CD4-positive, alpha-beta T cell (primary cell): ENCODE measurements at regions of chr10 and their contacts with region 1.

Region 1: GRCh38 chr10:119542988-119543813 is 682 bp upstream of the RGS10 start:
- DNase-seq: peak; percentile 47 to 85 (median 63)
- ATAC-seq: peak; percentile 48
- H3K4me3 ChIP-seq: peak overlapping the region; percentile 92
- H3K4me3 Mint-ChIP-seq: peak overlapping the region; percentile 98
- H3K27ac ChIP-seq: peak overlapping the region in 1 of 2 donors; percentile 84
- H3K27ac Mint-ChIP-seq: peak overlapping the region; percentile 88
- H3K4me1 ChIP-seq: peaks cover 40% of the 10 kb centered on the region
- H3K4me1 Mint-ChIP-seq: peaks cover 41% of the 10 kb centered on the region
- H3K27me3 ChIP-seq: no peaks in the 10 kb centered on the region
- H3K27me3 Mint-ChIP-seq: no peaks in the 10 kb centered on the region
- CTCF ChIP-seq: peak; percentile 85

Region 2: GRCh38 chr10:119305860-119306513 is 237.2 kb before region 1 on chr10:
- CTCF ChIA-PET with region 1: interaction called, 3 read pairs
- POLR2A ChIA-PET with region 1: interaction called, 9 read pairs
- intact Hi-C with region 1: loop called in 1 of 2 experiments (anchors 5 kb)
- DNase-seq: peak; percentile 50 to 92 (median 82)
- ATAC-seq: peak; percentile 81
- H3K4me3 ChIP-seq: peak overlapping the region; percentile 57
- H3K4me3 Mint-ChIP-seq: peak overlapping the region; percentile 88
- H3K27ac ChIP-seq: peak overlapping the region; percentile 83 to 94
- H3K27ac Mint-ChIP-seq: peak overlapping the region; percentile 94
- H3K4me1 ChIP-seq: peaks cover 77% of the 10 kb centered on the region
- H3K4me1 Mint-ChIP-seq: peaks cover 75% of the 10 kb centered on the region
- H3K27me3 ChIP-seq: no peaks in the 10 kb centered on the region
- H3K27me3 Mint-ChIP-seq: no peaks in the 10 kb centered on the region
- CTCF ChIP-seq: no peak

Region 3: DNA sequence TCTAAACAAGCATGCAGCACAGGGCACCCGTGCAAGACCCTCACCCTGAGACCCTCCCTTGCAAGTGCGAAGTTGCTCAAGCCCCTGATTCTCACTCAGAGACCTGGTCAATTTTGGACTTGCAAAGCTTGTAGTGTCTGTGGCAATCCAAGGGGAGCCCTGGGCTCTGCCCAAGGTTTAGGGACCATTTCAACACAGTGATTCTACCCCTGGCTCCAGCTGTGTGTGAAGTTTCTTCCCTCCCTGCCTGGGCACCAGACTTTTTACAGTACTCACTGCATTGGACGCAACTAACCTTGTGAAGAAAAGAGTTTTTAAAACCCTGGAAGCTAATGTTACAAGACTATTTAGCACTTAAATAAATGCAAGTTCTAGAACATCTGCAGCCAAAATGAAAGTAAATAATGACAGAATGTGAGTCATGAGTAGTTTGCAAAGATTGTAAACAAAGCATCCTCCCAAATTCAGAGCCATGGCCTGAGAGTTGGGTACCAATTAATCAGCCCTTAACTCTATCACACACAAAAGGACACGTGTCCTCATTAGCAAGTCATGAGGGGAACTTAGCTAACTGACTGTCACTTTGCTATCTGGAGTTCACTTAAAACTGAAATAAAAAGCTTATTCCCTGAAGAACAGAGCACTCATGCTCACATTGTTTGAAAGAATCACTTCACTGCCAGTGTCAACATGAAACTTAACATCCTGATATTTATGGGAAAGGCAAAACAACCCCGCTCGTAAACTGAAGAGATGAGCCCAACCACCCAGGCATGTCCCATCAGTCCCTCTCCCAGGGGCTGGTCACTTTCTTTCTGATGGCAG is 48.8 kb before region 1 on chr10:
- CTCF ChIA-PET with region 1: interaction called, 14 read pairs
- POLR2A ChIA-PET with region 1: interaction called, 74 read pairs
- intact Hi-C with region 1: no loop called
- DNase-seq: peak in 1 of 14 experiments; percentile 23
- ATAC-seq: no peak
- H3K4me3 ChIP-seq: no peak overlapping the region
- H3K4me3 Mint-ChIP-seq: peak overlapping the region; percentile 57
- H3K27ac ChIP-seq: peak overlapping the region; percentile 33 to 57
- H3K27ac Mint-ChIP-seq: peak overlapping the region; percentile 92
- H3K4me1 ChIP-seq: peaks cover 72% of the 10 kb centered on the region
- H3K4me1 Mint-ChIP-seq: peaks cover 80% of the 10 kb centered on the region
- H3K27me3 ChIP-seq: no peaks in the 10 kb centered on the region
- H3K27me3 Mint-ChIP-seq: no peaks in the 10 kb centered on the region
- CTCF ChIP-seq: no peak

Region 4: GRCh38 chr10:119526621-119527592 is 16.3 kb before region 1 on chr10:
- CTCF ChIA-PET with region 1: interaction called, 13 read pairs
- POLR2A ChIA-PET with region 1: interaction called, 38 read pairs
- intact Hi-C with region 1: no loop called
- DNase-seq: peak in 1 of 14 experiments; percentile 3
- ATAC-seq: peak; percentile 32
- H3K4me3 ChIP-seq: no peak overlapping the region
- H3K4me3 Mint-ChIP-seq: peak overlapping the region; percentile 1
- H3K27ac ChIP-seq: no peak overlapping the region
- H3K27ac Mint-ChIP-seq: peak overlapping the region; percentile 59
- H3K4me1 ChIP-seq: peaks cover 38% of the 10 kb centered on the region
- H3K4me1 Mint-ChIP-seq: peaks cover 63% of the 10 kb centered on the region
- H3K27me3 ChIP-seq: no peaks in the 10 kb centered on the region
- H3K27me3 Mint-ChIP-seq: no peaks in the 10 kb centered on the region
- CTCF ChIP-seq: no peak

Region 5: DNA sequence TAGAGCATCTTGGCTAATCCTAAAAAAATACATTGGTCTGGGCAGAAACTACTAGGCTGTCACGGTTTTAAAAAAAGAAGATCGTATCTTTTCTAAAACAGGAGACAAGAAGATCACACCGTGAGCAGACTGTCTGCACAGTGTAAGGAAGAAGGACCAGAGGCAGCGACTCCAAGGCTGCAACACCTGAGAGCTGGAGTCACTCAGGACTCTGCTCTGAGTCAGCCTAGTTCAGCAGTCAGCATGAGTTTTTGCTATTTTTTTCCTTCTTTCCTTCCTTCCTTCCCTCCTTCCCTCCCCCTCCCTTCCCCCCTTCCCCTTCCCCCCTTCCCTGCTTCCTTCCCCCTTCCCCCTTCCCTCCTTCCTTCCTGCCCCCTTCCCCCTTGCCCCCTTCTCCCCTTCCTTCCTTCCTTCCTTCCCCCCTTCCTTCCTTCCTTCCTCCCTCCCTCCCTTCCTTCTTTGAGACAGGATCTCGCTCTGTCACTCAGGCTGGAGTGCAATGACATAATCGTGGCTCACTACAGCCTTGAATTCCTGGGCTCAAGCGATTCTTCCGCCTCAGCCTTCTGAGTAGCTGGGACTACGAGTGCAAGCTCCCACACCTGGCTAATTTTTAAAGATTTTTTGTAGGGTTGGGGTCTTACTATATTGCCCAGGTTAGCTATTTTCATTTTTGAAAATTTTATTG is 132.4 kb after region 1 on chr10:
- CTCF ChIA-PET with region 1: no interaction called
- POLR2A ChIA-PET with region 1: no interaction called
- intact Hi-C with region 1: no loop called
- DNase-seq: no peak
- ATAC-seq: no peak
- H3K4me3 ChIP-seq: no peak overlapping the region
- H3K4me3 Mint-ChIP-seq: no peak overlapping the region
- H3K27ac ChIP-seq: no peak overlapping the region
- H3K27ac Mint-ChIP-seq: no peak overlapping the region
- H3K4me1 ChIP-seq: peaks cover 3% of the 10 kb centered on the region
- H3K4me1 Mint-ChIP-seq: peaks cover 14% of the 10 kb centered on the region
- H3K27me3 ChIP-seq: no peaks in the 10 kb centered on the region
- H3K27me3 Mint-ChIP-seq: no peaks in the 10 kb centered on the region
- CTCF ChIP-seq: no peak

Region 6: DNA sequence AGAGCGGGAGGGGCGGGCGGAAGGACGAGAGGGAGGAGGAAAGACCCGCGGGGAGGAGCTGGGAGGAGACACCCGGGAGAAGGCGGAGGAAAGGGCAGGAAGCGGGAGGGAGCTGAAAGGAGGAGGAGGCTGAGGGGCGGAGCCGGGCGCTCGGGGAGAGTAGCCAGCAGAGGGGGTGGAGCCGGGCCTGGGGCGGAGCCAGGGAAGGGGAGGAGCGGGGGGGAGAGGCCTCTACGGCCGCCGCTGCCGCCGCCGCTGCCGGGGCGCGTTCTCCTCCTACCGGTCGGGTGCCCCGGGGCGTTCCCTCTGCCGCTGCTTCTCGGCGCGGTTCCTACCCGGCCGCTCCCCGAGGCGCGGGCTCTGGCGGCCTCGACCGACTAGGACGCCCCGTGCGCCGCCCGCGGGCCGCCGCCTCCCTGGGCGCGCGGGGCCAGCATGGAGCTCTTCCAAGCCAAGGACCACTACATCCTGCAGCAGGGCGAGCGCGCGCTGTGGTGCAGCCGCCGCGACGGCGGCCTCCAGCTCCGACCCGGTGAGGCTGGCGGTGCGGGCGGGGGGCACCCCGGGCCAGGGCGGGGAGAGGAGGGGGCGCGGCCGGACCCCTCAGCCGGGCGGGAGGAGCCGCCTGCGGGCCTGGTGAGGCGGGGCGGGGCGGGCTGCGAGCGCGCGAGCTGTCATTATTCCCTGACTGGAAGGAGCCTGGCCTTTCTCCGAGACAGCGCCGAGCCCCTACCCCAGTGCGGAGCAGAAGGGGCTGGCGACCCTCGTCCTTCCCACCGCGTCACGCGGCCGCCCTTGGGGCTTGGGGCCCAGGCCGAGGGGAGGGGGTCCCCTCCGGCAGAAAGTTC is 182.9 kb after region 1 on chr10 and contains the start of gene INPP5F:
- CTCF ChIA-PET with region 1: interaction called, 3 read pairs
- POLR2A ChIA-PET with region 1: interaction called, 3 read pairs
- intact Hi-C with region 1: loop called in 1 of 2 experiments (anchors 2 kb)
- DNase-seq: peak; percentile 96 to 100 (median 99)
- ATAC-seq: peak; percentile 91
- H3K4me3 ChIP-seq: peak within 1 kb of the TSS; percentile 79
- H3K4me3 Mint-ChIP-seq: peak within 1 kb of the TSS; percentile 88
- H3K27ac ChIP-seq: peak within 1 kb of the TSS; percentile 53 to 59
- H3K27ac Mint-ChIP-seq: peak within 1 kb of the TSS; percentile 77
- H3K4me1 ChIP-seq: peaks cover 22% of the 10 kb centered on the region
- H3K4me1 Mint-ChIP-seq: peaks cover 30% of the 10 kb centered on the region
- H3K27me3 ChIP-seq: no peaks in the 10 kb centered on the region
- H3K27me3 Mint-ChIP-seq: no peaks in the 10 kb centered on the region
- CTCF ChIP-seq: peak; percentile 17
- total RNA-seq, gene INPP5F: 6.2 to 6.4 TPM